Panc1 (cell line): ENCODE measurements at regions of chrX and their contacts with region 1.

Region 1: GRCh38 chrX:123665197-123665596 is 67.7 kb downstream of the THOC2 start:
- DNase-seq: peak; percentile 77
- ATAC-seq: peak; percentile 94
- H3K4me3 ChIP-seq: no peak overlapping the region
- H3K27ac ChIP-seq: peak overlapping the region; percentile 48
- H3K4me1 ChIP-seq: peaks cover 12% of the 10 kb centered on the region
- H3K27me3 ChIP-seq: no peaks in the 10 kb centered on the region
- CTCF ChIP-seq: no peak

Region 2: DNA sequence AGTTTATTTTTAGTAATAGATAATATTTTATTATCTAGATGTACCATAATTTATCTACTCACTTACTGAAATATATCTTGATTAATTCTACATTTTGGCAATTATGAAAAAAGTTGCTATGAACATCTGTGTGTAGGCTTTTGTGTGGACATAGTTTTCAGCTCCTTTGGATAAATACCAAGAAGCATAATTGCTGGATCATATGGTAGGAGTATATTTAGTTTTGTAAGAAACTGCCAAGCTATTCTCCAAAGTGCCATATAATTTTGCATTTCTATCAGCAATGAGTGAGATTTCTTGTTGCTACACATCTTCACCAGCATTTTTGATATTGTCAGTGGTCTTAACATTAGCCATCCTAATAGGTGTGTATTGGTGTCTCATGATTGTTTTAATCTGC is 1363.7 kb before region 1 on chrX:
- CTCF ChIA-PET with region 1: no interaction called
- POLR2A ChIA-PET with region 1: interaction called, 15 read pairs
- in situ Hi-C with region 1: no loop called
- intact Hi-C with region 1: no loop called
- DNase-seq: no peak
- ATAC-seq: no peak
- H3K4me3 ChIP-seq: no peak overlapping the region
- H3K27ac ChIP-seq: no peak overlapping the region
- H3K4me1 ChIP-seq: no peaks in the 10 kb centered on the region
- H3K27me3 ChIP-seq: no peaks in the 10 kb centered on the region
- CTCF ChIP-seq: no peak

Region 3: GRCh38 chrX:123704781-123705180 is 39.6 kb after region 1 on chrX:
- CTCF ChIA-PET with region 1: no interaction called
- POLR2A ChIA-PET with region 1: no interaction called
- in situ Hi-C with region 1: no loop called
- intact Hi-C with region 1: no loop called
- DNase-seq: no peak
- ATAC-seq: no peak
- H3K4me3 ChIP-seq: no peak overlapping the region
- H3K27ac ChIP-seq: no peak overlapping the region
- H3K4me1 ChIP-seq: no peaks in the 10 kb centered on the region
- H3K27me3 ChIP-seq: no peaks in the 10 kb centered on the region
- CTCF ChIP-seq: no peak